Prostate gland (tissue), 2 donors: ENCODE measurements at regions of chr3 and their contacts with region 1.

Region 1: GRCh38 chr3:55485211-55485791 is 1.8 kb downstream of the WNT5A start:
- DNase-seq: peak; percentile 57
- H3K4me3 ChIP-seq: peak overlapping the region; percentile 58 to 61
- H3K27ac ChIP-seq: peak overlapping the region; percentile 62 to 64
- H3K4me1 ChIP-seq: no peaks in the 10 kb centered on the region
- H3K27me3 ChIP-seq: peaks cover 10% of the 10 kb centered on the region
- CTCF ChIP-seq: peak; percentile 57 to 80 (median 68)
- POLR2A ChIP-seq: no peak

Region 2: GRCh38 chr3:54120657-54121413 is 1364.5 kb before region 1 on chr3:
- intact Hi-C with region 1: loop called (anchors 10 kb)
- DNase-seq: no peak
- H3K4me3 ChIP-seq: peak overlapping the region; percentile 37 to 45
- H3K27ac ChIP-seq: no peak overlapping the region
- H3K4me1 ChIP-seq: peaks cover 7% of the 10 kb centered on the region
- H3K27me3 ChIP-seq: peaks cover 13% of the 10 kb centered on the region
- CTCF ChIP-seq: no peak
- POLR2A ChIP-seq: no peak

Region 3: GRCh38 chr3:54951405-54951804 is 533.9 kb before region 1 on chr3:
- intact Hi-C with region 1: loop called (anchors 5 kb)
- DNase-seq: peak; percentile 38
- H3K4me3 ChIP-seq: no peak overlapping the region
- H3K27ac ChIP-seq: no peak overlapping the region
- H3K4me1 ChIP-seq: no peaks in the 10 kb centered on the region
- H3K27me3 ChIP-seq: no peaks in the 10 kb centered on the region
- CTCF ChIP-seq: peak in 2 of 4 experiments; percentile 44 to 52
- POLR2A ChIP-seq: no peak

Region 4: DNA sequence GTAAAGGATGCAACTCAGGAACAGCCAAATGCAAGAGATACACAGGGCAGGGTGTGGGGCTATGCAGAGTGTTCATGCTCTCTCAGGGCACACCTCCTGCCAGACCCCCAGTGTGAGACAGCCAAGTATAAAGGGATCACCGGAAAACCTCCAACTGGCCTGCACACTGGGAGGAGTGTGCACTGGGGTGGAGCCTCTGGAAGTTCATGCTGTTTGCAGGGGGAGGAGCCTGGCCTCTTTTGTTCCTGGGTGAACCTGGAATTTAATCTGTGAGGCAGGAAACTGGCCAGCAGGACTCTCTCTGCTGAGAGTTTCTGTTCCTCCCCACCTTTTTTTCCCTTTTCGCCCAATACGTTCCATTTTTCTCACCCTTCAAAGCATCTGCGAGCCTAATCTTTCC is 202.3 kb before region 1 on chr3:
- intact Hi-C with region 1: no loop called
- DNase-seq: no peak
- H3K4me3 ChIP-seq: no peak overlapping the region
- H3K27ac ChIP-seq: no peak overlapping the region
- H3K4me1 ChIP-seq: no peaks in the 10 kb centered on the region
- H3K27me3 ChIP-seq: no peaks in the 10 kb centered on the region
- CTCF ChIP-seq: no peak
- POLR2A ChIP-seq: no peak

Region 5: GRCh38 chr3:55591888-55592287 is 106.6 kb after region 1 on chr3:
- intact Hi-C with region 1: loop called (anchors 5 kb)
- DNase-seq: no peak
- H3K4me3 ChIP-seq: no peak overlapping the region
- H3K27ac ChIP-seq: no peak overlapping the region
- H3K4me1 ChIP-seq: no peaks in the 10 kb centered on the region
- H3K27me3 ChIP-seq: no peaks in the 10 kb centered on the region
- CTCF ChIP-seq: no peak
- POLR2A ChIP-seq: no peak

Region 6: GRCh38 chr3:55746808-55747413 is 261.6 kb after region 1 on chr3:
- intact Hi-C with region 1: loop called (anchors 2 kb)
- DNase-seq: no peak
- H3K4me3 ChIP-seq: no peak overlapping the region
- H3K27ac ChIP-seq: no peak overlapping the region
- H3K4me1 ChIP-seq: no peaks in the 10 kb centered on the region
- H3K27me3 ChIP-seq: no peaks in the 10 kb centered on the region
- CTCF ChIP-seq: peak in 3 of 4 experiments; percentile 28 to 46 (median 29)
- POLR2A ChIP-seq: no peak

Region 7: DNA sequence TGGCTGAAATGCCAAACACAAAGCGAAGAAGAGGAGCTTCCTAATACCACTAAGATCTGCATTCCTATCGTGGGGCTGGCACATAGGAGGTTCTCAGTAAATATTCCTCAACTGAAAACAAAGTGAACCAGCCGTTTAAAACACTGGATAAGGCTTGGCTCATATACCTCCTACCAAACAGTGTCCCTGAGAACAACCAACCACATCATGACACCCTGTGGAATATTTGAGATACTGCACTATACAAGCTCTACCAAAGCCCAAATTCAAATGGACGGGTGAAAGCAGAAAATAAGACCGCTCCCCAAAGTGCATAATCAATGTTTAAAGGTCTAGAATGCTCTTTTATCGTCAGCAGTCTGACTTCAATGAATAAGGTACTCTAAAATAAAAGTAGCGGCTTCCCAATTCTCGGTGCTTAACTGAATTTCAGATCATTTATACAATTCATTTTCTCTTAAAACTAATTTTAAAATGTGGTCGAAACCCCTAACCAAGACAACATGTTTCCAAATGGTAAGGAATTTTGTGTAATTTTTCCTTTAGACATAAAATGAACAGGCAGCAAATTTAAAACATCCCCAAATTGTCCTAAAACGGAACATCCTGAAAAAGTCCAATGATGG is 557.1 kb after region 1 on chr3:
- intact Hi-C with region 1: loop called (anchors 10 kb)
- DNase-seq: peak; percentile 10
- H3K4me3 ChIP-seq: no peak overlapping the region
- H3K27ac ChIP-seq: no peak overlapping the region
- H3K4me1 ChIP-seq: no peaks in the 10 kb centered on the region
- H3K27me3 ChIP-seq: no peaks in the 10 kb centered on the region
- CTCF ChIP-seq: peak in 3 of 4 experiments; percentile 43 to 66 (median 49)
- POLR2A ChIP-seq: no peak